ENCODE measurements at regions of chr1 and their contacts with region 1.

Region 1: GRCh38 chr1:246753670-246754535 is 29.7 kb downstream of the SCCPDH start:
- DNase-seq: peak; percentile 43 to 76
- ATAC-seq: peak; percentile 79 to 96 (median 95)
- H3K4me3 ChIP-seq: no peak overlapping the region
- H3K4me3 Mint-ChIP-seq: no peak overlapping the region
- H3K27ac ChIP-seq: no peak overlapping the region
- H3K27ac Mint-ChIP-seq: no peak overlapping the region
- H3K4me1 ChIP-seq: no peaks in the 10 kb centered on the region
- H3K4me1 Mint-ChIP-seq: no peaks in the 10 kb centered on the region
- H3K27me3 ChIP-seq: no peaks in the 10 kb centered on the region
- H3K27me3 Mint-ChIP-seq: no peaks in the 10 kb centered on the region
- CTCF ChIP-seq: peak; percentile 69

Region 2: GRCh38 chr1:246012341-246012740 is 741.6 kb before region 1 on chr1:
- intact Hi-C with region 1: loop called (anchors 10 kb)
- DNase-seq: peak in 1 of 2 donors; percentile 40
- ATAC-seq: peak in 1 of 3 donors; percentile 47
- H3K4me3 ChIP-seq: no peak overlapping the region
- H3K4me3 Mint-ChIP-seq: no peak overlapping the region
- H3K27ac ChIP-seq: no peak overlapping the region
- H3K27ac Mint-ChIP-seq: no peak overlapping the region
- H3K4me1 ChIP-seq: no peaks in the 10 kb centered on the region
- H3K4me1 Mint-ChIP-seq: peaks cover 0 to 8% of the 10 kb centered on the region in 2 donors
- H3K27me3 ChIP-seq: no peaks in the 10 kb centered on the region
- H3K27me3 Mint-ChIP-seq: no peaks in the 10 kb centered on the region
- CTCF ChIP-seq: peak; percentile 55

Region 3: GRCh38 chr1:246689409-246690008 is 64.4 kb before region 1 on chr1:
- intact Hi-C with region 1: loop called (anchors 2 kb)
- DNase-seq: peak in 1 of 2 donors; percentile 72
- ATAC-seq: peak; percentile 85 to 98 (median 89)
- H3K4me3 ChIP-seq: no peak overlapping the region
- H3K4me3 Mint-ChIP-seq: no peak overlapping the region
- H3K27ac ChIP-seq: no peak overlapping the region
- H3K27ac Mint-ChIP-seq: no peak overlapping the region
- H3K4me1 ChIP-seq: peaks cover 4% of the 10 kb centered on the region
- H3K4me1 Mint-ChIP-seq: peaks cover 4% of the 10 kb centered on the region in 2 donors
- H3K27me3 ChIP-seq: no peaks in the 10 kb centered on the region
- H3K27me3 Mint-ChIP-seq: peaks cover 0 to 5% of the 10 kb centered on the region in 2 donors
- CTCF ChIP-seq: peak; percentile 49

Measured in natural killer cell (primary cell).